GM10248 (cell line): ENCODE measurements at regions of chr3 and their contacts with region 1.

Region 1: DNA sequence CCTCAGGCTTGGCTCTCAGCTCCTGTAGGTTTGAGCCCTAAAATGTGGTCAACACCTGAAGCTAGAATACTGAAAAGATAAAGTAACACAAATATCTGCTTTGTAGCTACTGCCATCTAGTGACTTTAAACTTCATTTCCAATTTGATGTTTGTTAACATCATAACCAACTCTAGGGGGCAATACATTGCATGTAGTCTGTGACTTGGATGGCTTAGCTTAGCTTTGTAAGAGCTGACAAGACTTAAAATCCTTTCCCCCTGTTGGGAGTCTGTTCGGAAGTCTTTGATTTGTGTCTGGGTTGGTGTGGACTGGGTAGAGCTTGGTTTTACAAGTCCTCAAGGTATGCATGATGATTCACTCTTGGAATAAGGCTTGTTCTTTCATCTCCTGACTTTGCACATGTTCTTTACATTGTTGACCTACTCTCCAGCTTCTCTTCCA is 51.7 kb downstream of the SCN11A start:
- DNase-seq: peak; percentile 71
- CTCF ChIP-seq: peak; percentile 82

Region 2: DNA sequence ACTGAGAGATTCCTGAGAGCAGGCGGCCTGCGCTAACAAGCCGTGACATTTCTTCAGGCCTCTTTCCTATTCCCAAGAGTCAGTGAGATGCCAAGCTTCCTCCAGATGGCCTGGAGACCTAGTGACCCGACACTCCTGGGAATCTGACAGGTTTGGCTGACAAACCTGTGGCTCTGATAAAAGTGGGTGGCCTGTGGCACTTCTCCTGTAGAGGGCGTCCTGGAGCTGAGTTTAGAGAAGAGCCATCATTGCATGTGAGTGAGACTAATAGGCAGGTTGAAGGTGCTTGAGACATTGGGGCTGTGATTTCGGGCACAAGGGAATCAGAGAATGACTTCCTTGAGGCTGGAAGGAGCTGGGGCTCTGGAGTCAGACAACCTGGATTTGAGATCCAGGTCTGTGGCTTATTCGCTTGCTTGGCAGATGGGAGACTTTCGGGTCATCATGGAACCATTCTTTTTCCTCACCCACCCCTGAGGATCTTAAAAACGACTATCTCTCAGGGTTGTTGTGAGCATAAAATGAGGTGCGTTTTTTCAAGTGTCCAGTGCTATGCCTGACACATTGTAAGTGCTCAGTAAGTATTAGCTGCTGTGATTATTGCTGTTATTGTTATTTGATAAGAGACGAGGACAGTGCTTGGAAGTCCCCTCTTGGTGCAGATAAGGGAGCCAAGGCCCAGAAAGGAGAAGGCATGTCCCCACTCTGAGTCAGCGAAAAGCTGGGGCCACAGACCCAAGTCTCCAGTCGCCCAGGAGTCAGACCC is 261.2 kb before region 1 on chr3:
- CTCF ChIA-PET with region 1: interaction called, 18 read pairs
- POLR2A ChIA-PET with region 1: no interaction called
- DNase-seq: peak; percentile 52
- CTCF ChIP-seq: peak; percentile 17

Region 3: GRCh38 chr3:38989917-38990510 is 10.0 kb before region 1 on chr3:
- CTCF ChIA-PET with region 1: interaction called, 13 read pairs
- POLR2A ChIA-PET with region 1: no interaction called
- DNase-seq: no peak
- CTCF ChIP-seq: no peak

Region 4: GRCh38 chr3:39021029-39021428 is 21.0 kb after region 1 on chr3:
- CTCF ChIA-PET with region 1: interaction called, 15 read pairs
- POLR2A ChIA-PET with region 1: no interaction called
- DNase-seq: no peak
- CTCF ChIP-seq: no peak

Region 5: DNA sequence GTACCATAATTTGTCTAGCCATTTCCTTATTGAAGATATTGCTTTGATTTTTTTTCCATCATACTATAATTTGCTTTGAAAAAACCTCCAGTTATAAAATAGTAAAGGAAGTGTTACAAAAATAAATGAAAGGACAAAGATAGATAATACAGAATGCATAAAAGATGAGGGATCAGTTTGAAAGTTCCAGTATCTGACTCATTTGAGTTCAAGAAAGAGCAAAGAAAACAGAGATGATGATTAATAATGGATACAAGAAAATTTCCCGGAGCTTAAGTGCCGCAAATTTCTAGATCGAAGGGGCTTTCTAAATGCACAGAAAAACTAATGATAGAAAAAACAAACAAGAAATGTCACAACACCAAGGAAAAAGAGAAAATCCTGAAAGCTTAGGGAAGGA is 56.1 kb after region 1 on chr3:
- CTCF ChIA-PET with region 1: no interaction called
- POLR2A ChIA-PET with region 1: no interaction called
- DNase-seq: no peak
- CTCF ChIP-seq: no peak